ENCODE measurements at regions of chr12 and their contacts with region 1.

Region 1: DNA sequence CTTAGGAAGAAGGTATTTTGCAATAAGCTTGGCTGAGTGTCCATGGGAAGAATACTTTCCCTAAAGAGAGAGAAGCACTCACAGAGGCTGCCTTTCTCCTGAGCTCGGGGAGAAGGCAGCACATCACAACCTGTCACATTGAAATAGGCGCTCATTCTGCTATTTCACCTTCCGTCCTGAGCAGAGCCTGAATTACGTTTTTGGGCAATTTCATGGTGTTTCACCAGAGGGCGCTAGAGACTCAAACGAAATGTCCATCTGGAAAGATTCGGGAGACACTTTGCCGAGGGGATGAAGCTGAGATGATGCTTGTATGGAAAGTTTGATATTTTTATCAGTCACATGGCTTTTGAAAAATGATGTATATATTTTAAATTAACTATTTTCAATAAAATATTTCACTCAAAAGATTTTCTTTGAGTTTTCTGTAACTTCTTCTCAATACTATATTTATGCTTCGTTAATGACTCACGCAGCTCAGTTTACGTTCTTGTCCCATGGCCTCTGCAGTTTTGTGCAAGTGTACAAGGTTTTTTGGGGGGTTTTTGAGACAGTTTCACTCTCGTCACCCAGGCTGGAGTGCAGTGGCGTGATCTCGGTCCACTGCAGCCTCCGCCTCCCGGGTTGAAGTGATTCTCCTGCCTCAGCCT is 17.4 kb upstream of the B4GALNT3 start:
- DNase-seq: peak; percentile 40 to 47
- H3K4me3 ChIP-seq: no peak overlapping the region
- H3K27ac ChIP-seq: no peak overlapping the region
- H3K4me1 ChIP-seq: no peaks in the 10 kb centered on the region
- H3K27me3 ChIP-seq: no peaks in the 10 kb centered on the region
- CTCF ChIP-seq: peak; percentile 73 to 81 (median 76)
- POLR2A ChIP-seq: no peak

Region 2: DNA sequence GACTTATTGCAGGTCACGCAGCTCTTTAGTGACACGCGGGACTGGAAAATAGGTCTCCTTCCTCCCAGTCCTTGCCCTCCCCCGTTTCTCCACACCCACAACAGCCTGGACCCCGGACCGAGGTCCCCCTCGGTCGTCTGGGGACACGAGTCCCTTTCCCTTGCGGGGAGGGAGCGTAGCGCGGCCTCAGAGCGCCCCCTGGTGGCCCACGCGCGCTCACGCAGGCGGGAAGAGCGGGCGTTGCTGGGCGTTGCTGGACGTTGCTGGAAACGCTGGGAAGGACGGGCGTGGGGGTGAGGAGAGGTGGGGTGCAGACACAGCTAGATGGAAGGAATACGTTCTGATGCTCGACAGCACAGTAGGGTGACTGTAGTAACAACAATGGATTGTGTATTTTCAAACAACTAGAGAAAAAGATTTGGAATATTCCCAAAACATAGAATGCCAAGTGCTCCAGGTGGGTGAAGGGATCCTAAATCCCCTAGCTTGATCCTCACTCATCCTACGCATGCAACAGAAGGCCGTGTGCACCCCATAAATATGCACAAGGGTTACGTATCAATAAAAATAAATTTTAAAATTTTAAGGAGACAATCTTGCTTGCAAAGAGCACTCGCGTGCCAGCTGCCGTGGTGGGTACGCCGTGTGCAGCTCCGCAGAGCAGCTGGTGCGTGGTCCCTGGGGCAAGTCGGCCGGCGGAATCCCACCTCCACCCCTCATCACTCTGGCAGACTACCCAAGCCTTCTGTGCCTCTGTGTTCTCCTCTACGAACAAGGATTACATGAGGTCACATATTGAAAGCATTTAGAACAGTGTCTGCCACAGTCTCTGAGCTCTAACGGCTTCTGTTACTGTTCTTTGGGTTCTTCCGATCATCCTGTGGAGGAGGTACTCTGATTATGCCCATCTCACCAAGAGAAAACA is 104.8 kb after region 1 on chr12:
- intact Hi-C with region 1: loop called (anchors 5 kb)
- DNase-seq: peak; percentile 33 to 67
- H3K4me3 ChIP-seq: no peak overlapping the region
- H3K27ac ChIP-seq: no peak overlapping the region
- H3K4me1 ChIP-seq: no peaks in the 10 kb centered on the region
- H3K27me3 ChIP-seq: no peaks in the 10 kb centered on the region
- CTCF ChIP-seq: peak; percentile 92 to 99 (median 98)
- POLR2A ChIP-seq: no peak

Measured in uterus (tissue), 4 donors.